Mammary epithelial cell (primary cell): ENCODE measurements at regions of chr2 and their contacts with region 1.

Region 1: GRCh38 chr2:11279398-11279797 is 65.0 kb downstream of the ROCK2 start:
- DNase-seq: no peak
- H3K4me3 ChIP-seq: no peak overlapping the region
- H3K27ac ChIP-seq: no peak overlapping the region
- H3K4me1 ChIP-seq: no peaks in the 10 kb centered on the region
- H3K27me3 ChIP-seq: no peaks in the 10 kb centered on the region
- CTCF ChIP-seq: no peak

Region 2: GRCh38 chr2:11264007-11264406 is 15.4 kb before region 1 on chr2:
- CTCF ChIA-PET with region 1: interaction called, 10 read pairs
- dilution Hi-C with region 1: no loop called
- in situ Hi-C with region 1: no loop called
- intact Hi-C with region 1: no loop called
- DNase-seq: no peak
- H3K4me3 ChIP-seq: no peak overlapping the region
- H3K27ac ChIP-seq: no peak overlapping the region
- H3K4me1 ChIP-seq: no peaks in the 10 kb centered on the region
- H3K27me3 ChIP-seq: no peaks in the 10 kb centered on the region
- CTCF ChIP-seq: no peak